GM12878 (cell line): ENCODE measurements at regions of chr2 and their contacts with region 1.

Region 1: GRCh38 chr2:7672027-7672684 is 754.9 kb downstream of the RNF144A start:
- DNase-seq: peak; percentile 35
- ATAC-seq: no peak
- H3K4me3 ChIP-seq: no peak overlapping the region
- H3K27ac ChIP-seq: no peak overlapping the region
- H3K4me1 ChIP-seq: no peaks in the 10 kb centered on the region
- H3K27me3 ChIP-seq: no peaks in the 10 kb centered on the region
- CTCF ChIP-seq: peak; percentile 40 to 76 (median 70)
- EP300 ChIP-seq: no peak
- POLR2A ChIP-seq: no peak
- RAD21 ChIP-seq: peak; percentile 47

Region 2: GRCh38 chr2:7510350-7510749 is 161.8 kb before region 1 on chr2:
- CTCF ChIA-PET with region 1: interaction called, 10 read pairs
- POLR2A ChIA-PET with region 1: no interaction called
- RAD21 ChIA-PET with region 1: interaction called, 3 read pairs
- SMC1A ChIA-PET with region 1: interaction called, 4 read pairs
- in situ Hi-C with region 1: no loop called
- intact Hi-C with region 1: loop called (anchors 5 kb)
- DNase-seq: no peak
- ATAC-seq: peak; percentile 61
- H3K4me3 ChIP-seq: no peak overlapping the region
- H3K27ac ChIP-seq: no peak overlapping the region
- H3K4me1 ChIP-seq: peaks cover 4% of the 10 kb centered on the region; the same call in 1 of the 2 replicates
- H3K27me3 ChIP-seq: no peaks in the 10 kb centered on the region
- CTCF ChIP-seq: peak; percentile 4 to 19 (median 17); a peak in 1 of 6 replicates
- EP300 ChIP-seq: no peak
- POLR2A ChIP-seq: no peak
- RAD21 ChIP-seq: 0 out of 2 replicates have a peak, but pooled peaks have one; percentile 13

Region 3: DNA sequence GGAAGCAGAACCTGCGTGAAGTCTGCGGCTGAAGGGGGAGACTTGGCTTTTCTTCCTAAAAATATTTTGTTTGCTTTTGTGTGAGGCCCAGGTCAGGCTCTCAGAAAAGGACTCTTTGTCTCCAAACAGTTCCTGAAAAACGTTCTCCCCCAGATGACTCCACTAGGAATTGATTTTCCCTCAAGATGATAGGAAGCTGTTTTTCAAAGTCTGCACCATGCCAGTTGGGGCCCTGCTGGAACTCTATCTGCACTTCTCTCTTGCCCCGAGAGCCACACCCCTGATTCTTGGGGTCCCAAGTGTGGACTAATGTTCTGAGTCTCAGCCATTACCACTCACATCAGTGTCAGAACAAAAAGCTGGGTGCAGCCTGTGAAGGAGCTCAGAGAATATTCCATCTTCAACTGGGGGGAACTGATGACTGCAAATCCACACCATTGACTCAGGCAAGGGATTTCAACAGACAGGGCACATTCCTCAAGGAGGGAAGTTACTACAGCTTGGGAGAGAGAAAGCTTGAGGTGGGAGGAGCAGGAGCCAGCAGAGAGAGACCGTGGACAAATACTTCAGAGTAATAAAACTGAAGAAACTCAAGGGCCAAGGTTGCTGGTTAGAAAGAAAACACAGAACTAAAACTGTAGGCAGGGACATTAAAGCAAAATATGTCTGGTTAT is 13.3 kb after region 1 on chr2:
- CTCF ChIA-PET with region 1: interaction called, 36 read pairs
- POLR2A ChIA-PET with region 1: interaction called, 3 read pairs
- RAD21 ChIA-PET with region 1: interaction called, 3 read pairs
- SMC1A ChIA-PET with region 1: interaction called, 7 read pairs
- in situ Hi-C with region 1: no loop called
- intact Hi-C with region 1: no loop called
- DNase-seq: no peak
- ATAC-seq: no peak
- H3K4me3 ChIP-seq: no peak overlapping the region
- H3K27ac ChIP-seq: no peak overlapping the region
- H3K4me1 ChIP-seq: no peaks in the 10 kb centered on the region
- H3K27me3 ChIP-seq: no peaks in the 10 kb centered on the region; a peak in 1 of 4 replicates
- CTCF ChIP-seq: no peak
- EP300 ChIP-seq: no peak
- POLR2A ChIP-seq: no peak
- RAD21 ChIP-seq: no peak

Region 4: DNA sequence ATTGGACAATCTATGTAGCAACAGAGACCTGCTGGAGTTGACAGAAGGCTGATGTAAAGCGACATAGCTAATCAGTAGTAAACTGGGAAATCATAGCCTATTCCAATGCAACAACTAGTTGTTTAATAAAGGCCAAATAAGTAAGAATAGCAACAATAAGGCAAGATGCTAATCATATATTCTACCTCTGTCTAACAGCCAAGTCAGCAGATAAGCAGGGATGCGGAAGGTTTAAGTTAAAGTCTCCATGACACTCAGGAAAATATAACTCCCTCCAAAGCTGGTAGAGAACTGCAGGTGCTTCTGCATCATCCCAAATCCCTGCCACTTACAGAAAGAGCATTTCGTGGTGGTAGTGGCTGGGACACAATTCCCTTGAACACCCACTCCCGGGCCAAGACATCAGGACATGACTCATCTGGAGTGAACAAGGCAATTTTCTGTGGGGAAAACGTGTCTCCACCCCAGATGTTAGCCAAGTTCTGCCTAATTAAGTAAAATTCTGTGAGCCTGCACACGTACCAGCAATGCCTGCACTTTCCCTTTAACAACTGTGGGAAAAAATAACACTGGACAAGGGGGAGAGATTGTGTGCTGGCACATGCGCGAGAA is 596.1 kb after region 1 on chr2:
- CTCF ChIA-PET with region 1: no interaction called
- POLR2A ChIA-PET with region 1: no interaction called
- RAD21 ChIA-PET with region 1: no interaction called
- SMC1A ChIA-PET with region 1: no interaction called
- in situ Hi-C with region 1: no loop called
- intact Hi-C with region 1: no loop called
- DNase-seq: no peak
- ATAC-seq: no peak
- H3K4me3 ChIP-seq: no peak overlapping the region
- H3K27ac ChIP-seq: no peak overlapping the region
- H3K4me1 ChIP-seq: no peaks in the 10 kb centered on the region
- H3K27me3 ChIP-seq: no peaks in the 10 kb centered on the region
- CTCF ChIP-seq: no peak
- EP300 ChIP-seq: no peak
- POLR2A ChIP-seq: no peak
- RAD21 ChIP-seq: no peak